Right ventricle myocardium superior (tissue), 1 donor: ENCODE measurements at regions of chr2 and their contacts with region 1.

Region 1: GRCh38 chr2:127735537-127736399 is 34.5 kb downstream of the SFT2D3 start:
- DNase-seq: no peak
- ATAC-seq: no peak

Region 2: DNA sequence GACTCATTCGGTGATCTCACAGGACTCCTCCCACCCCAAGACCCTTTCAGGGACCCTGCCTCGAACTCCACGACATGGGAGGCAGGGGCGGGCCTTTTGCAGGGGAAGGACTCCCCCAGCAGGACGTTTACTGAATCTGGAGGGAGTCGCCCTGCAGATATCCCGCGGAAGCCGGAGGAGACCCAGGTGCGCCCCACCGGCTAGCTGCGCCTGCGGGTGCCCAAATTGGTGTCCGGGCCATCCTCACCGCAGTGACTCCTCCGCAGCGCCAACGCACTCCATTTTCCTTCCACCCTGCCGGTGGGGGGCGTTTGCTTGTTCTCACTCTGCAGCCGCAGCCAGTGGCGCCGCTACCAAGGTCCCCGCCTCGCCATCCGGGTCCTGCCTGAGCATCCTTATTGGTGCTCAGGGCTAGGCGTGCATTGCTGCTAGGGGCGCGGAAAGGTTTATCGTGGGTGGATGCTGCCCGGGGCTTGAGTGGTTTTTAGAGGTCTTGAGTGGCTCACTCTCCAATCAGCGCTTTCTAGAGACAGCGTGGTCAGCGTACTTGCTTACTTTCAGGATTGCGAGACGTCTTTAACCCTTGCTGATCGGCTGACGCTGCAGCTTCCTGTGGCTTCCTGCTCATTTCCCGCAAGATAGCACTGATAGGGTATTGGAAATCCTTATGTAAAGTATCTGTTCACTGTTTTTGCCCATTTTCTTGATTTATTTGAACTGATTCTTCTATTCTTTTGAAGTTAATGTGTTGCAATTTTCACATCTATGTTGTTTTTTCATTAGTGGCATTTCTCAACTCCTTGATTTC is 710.2 kb before region 1 on chr2:
- intact Hi-C with region 1: no loop called
- DNase-seq: peak; percentile 81
- ATAC-seq: peak; percentile 88

Region 3: DNA sequence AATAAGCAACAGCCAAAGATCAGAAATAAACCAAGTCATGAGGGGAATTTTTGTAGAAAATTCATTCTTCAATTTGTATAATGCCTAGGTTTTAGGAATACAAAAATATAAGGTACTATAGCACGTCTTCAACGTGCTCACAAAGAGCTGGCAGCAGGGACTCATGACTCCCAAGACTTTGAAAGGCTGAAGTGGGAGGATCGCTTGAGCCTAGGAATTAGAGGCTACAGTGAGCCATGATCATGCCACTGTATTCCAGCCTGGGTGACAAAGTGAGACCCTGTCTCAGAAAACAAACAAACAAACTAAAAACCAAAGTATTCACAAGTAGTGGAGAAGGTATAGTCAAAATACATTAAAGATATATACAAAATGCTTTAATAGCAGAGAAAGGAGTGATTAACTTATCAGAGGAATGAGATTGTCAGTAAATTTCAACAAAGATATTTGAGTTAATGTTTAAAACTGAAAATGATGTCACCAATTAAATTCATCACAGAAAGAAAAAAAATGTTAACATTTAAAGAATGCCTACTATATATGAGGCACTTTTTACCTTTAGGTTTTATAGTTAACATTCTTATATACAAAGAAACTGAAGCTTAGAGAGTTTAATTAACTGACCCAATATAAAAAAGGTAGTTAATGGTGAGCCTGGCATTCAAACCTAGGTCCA is 72.0 kb after region 1 on chr2:
- intact Hi-C with region 1: loop called (anchors 10 kb)
- DNase-seq: no peak
- ATAC-seq: no peak

Region 4: GRCh38 chr2:127940641-127941040 is 204.9 kb after region 1 on chr2:
- intact Hi-C with region 1: no loop called
- DNase-seq: no peak
- ATAC-seq: no peak